K562 (cell line): ENCODE measurements at regions of chr4 and their contacts with region 1.

Region 1: GRCh38 chr4:2418650-2419571 is at the start of gene CFAP99:
- DNase-seq: peak; percentile 95 to 98 (median 96)
- ATAC-seq: peak; percentile 84
- H3K4me3 ChIP-seq: peak within 1 kb of the TSS; percentile 58
- H3K27ac ChIP-seq: peak within 1 kb of the TSS; percentile 45; the same call in 2 of the 3 replicates
- H3K4me1 ChIP-seq: peaks cover 32 to 57% of the 10 kb centered on the region in 2 experiments
- H3K27me3 ChIP-seq: no peaks in the 10 kb centered on the region; a peak in 1 of 5 replicates
- CTCF ChIP-seq: peak; percentile 19 to 37 (median 23); a peak in 4 of 6 replicates
- EP300 ChIP-seq: no peak
- POLR2A ChIP-seq: no peak
- RAD21 ChIP-seq: 0 out of 4 replicates have a peak, but pooled peaks of 1 of the 2 experiments have one; percentile 20
- polyA plus RNA-seq, gene CFAP99: not detected

Region 2: GRCh38 chr4:1870578-1871443 is 548.1 kb before region 1 on chr4 and contains the start of gene NSD2:
- CTCF ChIA-PET with region 1: no interaction called
- POLR2A ChIA-PET with region 1: no interaction called
- in situ Hi-C with region 1: no loop called
- intact Hi-C with region 1: loop called (anchors 5 kb)
- DNase-seq: peak; percentile 93 to 98 (median 94)
- ATAC-seq: peak; percentile 62
- H3K4me3 ChIP-seq: peak within 1 kb of the TSS; percentile 95
- H3K27ac ChIP-seq: peak within 1 kb of the TSS; percentile 99
- H3K4me1 ChIP-seq: peaks cover 24 to 32% of the 10 kb centered on the region in 2 experiments
- H3K27me3 ChIP-seq: no peaks in the 10 kb centered on the region
- CTCF ChIP-seq: no peak
- EP300 ChIP-seq: no peak
- POLR2A ChIP-seq: peak; percentile 85
- RAD21 ChIP-seq: no peak
- polyA plus RNA-seq, gene NSD2: 6.4 to 9.7 TPM

Region 3: DNA sequence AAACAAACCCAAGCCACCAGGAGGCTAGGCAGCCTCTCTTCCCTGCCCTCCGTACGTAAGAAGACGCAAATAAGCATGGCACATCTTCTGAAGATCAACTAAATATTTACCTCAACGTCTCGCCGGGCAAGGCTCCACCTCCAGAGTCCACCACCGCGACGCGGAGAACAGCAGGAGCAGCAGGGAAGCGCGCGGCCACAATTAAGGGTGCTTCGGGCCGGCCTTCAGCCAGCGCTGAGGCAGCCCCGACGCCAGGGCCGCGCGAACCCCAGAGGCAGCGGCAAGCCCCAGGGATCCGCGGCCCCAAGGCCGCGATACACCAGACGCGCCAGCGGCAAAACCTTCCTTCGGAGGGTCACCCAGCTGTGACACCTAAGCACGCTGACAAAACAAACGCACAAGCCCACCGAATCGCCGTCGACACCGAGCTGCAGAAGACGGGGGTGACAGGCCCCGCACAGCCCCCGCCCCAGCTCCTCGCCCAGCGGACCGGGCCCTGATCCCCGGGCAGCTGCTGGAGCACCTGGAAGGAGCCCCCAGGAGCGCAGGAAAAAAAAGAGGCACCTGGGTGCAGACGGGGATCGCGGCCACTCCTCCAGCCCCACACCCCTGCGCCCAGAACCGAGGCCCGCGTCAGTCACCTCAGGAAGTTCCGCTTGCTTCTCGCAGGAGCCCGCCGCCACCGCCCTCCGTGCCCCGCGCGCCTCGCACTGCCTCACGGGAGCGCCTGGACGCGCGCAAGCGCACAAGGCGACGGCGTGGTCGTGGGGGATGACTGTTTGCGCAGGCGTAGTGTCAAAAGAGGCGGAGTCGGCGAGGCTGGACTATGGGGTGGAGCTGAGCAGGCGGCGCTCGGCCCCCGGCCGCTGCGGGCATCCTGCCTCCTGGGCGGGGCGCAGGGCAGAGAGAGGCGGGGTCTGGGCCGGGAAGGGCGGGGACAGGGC is 177.2 kb before region 1 on chr4 and contains the starts of genes HAUS3 and POLN:
- CTCF ChIA-PET with region 1: no interaction called
- POLR2A ChIA-PET with region 1: interaction called, 3 read pairs
- in situ Hi-C with region 1: no loop called
- intact Hi-C with region 1: loop called (anchors 10 kb)
- DNase-seq: peak; percentile 98 to 99 (median 99)
- ATAC-seq: peak; percentile 94
- H3K4me3 ChIP-seq: peak within 1 kb of the TSS; percentile 79
- H3K27ac ChIP-seq: peak within 1 kb of the TSS; percentile 70
- H3K4me1 ChIP-seq: peaks cover 18 to 36% of the 10 kb centered on the region in 2 experiments
- H3K27me3 ChIP-seq: no peaks in the 10 kb centered on the region
- CTCF ChIP-seq: no peak
- EP300 ChIP-seq: no peak
- POLR2A ChIP-seq: peak; percentile 80
- RAD21 ChIP-seq: no peak
- polyA plus RNA-seq, gene HAUS3: 8.9 to 9.6 TPM
- polyA plus RNA-seq, gene POLN: 0.08 to 0.25 TPM

Region 4: DNA sequence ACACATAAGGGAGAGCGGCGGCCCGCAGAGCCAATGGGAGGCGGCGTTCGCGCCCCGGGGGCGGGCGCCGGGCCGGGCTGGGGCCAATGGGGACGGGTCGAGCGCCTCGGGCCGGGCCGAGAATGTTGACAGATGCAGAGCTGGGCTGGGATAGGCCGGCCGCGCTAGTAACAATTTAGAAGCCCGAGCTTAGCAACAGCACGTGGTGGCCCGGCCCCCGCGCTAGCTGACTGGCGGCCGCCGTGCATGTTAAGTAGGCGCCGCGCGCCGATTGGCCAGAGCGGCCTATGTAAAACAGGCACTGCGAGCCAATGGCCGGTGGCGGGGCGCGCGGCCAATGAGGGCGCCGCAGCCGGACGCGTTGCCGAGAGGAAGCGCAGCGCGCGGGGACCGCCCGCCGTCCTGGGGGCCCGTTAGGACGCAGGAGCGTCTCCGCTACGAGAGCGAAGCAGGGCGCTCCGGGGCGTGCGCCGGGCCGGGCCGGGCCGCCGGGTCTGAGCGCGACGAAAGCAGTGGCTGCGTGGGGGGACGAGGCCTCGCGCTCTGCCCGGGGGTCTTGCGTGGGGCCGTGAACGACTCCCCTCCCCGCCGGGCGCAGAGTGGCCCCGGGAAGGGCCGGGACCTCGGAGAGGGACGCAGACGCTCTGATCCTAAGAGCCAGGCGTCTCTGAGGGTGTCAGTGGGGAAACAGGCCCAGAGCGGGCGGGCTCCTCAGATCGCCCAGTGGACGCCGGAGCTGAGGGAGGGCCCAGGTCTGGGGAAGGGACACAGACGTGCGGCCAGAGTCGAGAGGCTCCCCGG is 156.6 kb before region 1 on chr4:
- CTCF ChIA-PET with region 1: no interaction called
- POLR2A ChIA-PET with region 1: no interaction called
- in situ Hi-C with region 1: no loop called
- intact Hi-C with region 1: loop called (anchors 5 kb)
- DNase-seq: peak; percentile 95 to 99 (median 98)
- ATAC-seq: peak; percentile 95
- H3K4me3 ChIP-seq: peak overlapping the region; percentile 71
- H3K27ac ChIP-seq: peak overlapping the region; percentile 87
- H3K4me1 ChIP-seq: peaks cover 16 to 78% of the 10 kb centered on the region in 2 experiments
- H3K27me3 ChIP-seq: no peaks in the 10 kb centered on the region
- CTCF ChIP-seq: no peak
- EP300 ChIP-seq: no peak
- POLR2A ChIP-seq: peak; percentile 87
- RAD21 ChIP-seq: no peak

Region 5: GRCh38 chr4:2364654-2365053 is 54.3 kb before region 1 on chr4:
- CTCF ChIA-PET with region 1: no interaction called
- POLR2A ChIA-PET with region 1: no interaction called
- in situ Hi-C with region 1: no loop called
- intact Hi-C with region 1: loop called (anchors 2 kb)
- DNase-seq: peak; percentile 78 to 95 (median 88)
- ATAC-seq: peak; percentile 89
- H3K4me3 ChIP-seq: peak overlapping the region; percentile 34
- H3K27ac ChIP-seq: peak overlapping the region; percentile 27
- H3K4me1 ChIP-seq: peaks cover 18 to 52% of the 10 kb centered on the region in 2 experiments; a peak in 4 of 5 replicates
- H3K27me3 ChIP-seq: no peaks in the 10 kb centered on the region
- CTCF ChIP-seq: no peak
- EP300 ChIP-seq: no peak
- POLR2A ChIP-seq: peak; percentile 65
- RAD21 ChIP-seq: no peak

Region 6: DNA sequence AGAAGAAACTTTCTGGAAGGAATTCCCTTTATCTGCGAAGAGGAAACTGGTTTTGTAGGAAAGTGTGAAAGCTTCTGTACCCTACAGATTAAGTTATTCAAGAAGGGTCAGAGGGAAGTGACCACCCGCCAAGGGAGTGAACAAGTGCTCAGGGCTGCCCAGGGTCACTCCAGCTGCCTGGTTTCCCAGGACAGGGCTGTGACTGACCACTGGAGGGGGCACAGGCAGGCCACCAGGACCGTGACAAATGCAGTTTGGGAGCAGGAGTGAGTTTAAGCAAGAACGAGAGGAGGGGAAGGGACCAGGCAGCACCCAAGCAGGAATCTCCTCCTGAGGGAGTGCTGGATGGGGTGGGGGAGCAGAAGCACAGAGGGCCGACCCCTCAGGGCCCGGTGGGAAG is 34.7 kb before region 1 on chr4:
- CTCF ChIA-PET with region 1: no interaction called
- POLR2A ChIA-PET with region 1: no interaction called
- in situ Hi-C with region 1: no loop called
- intact Hi-C with region 1: loop called (anchors 5 kb)
- DNase-seq: no peak
- ATAC-seq: peak; percentile 13; the same call in 1 of the 3 replicates
- H3K4me3 ChIP-seq: no peak overlapping the region
- H3K27ac ChIP-seq: no peak overlapping the region
- H3K4me1 ChIP-seq: peaks cover 41 to 56% of the 10 kb centered on the region in 2 experiments
- H3K27me3 ChIP-seq: no peaks in the 10 kb centered on the region
- CTCF ChIP-seq: peak in 1 of 3 experiments; percentile 15; a peak in 1 of 6 replicates
- EP300 ChIP-seq: no peak
- POLR2A ChIP-seq: no peak
- RAD21 ChIP-seq: peak in 1 of 2 experiments; percentile 15; a peak in 1 of 4 replicates

Region 7: GRCh38 chr4:2402029-2402428 is 16.9 kb before region 1 on chr4:
- CTCF ChIA-PET with region 1: no interaction called
- POLR2A ChIA-PET with region 1: interaction called, 7 read pairs
- in situ Hi-C with region 1: no loop called
- intact Hi-C with region 1: loop called (anchors 2 kb)
- DNase-seq: peak; percentile 89 to 93 (median 90)
- ATAC-seq: peak; percentile 96
- H3K4me3 ChIP-seq: no peak overlapping the region
- H3K27ac ChIP-seq: no peak overlapping the region
- H3K4me1 ChIP-seq: peaks cover 30 to 74% of the 10 kb centered on the region in 2 experiments
- H3K27me3 ChIP-seq: no peaks in the 10 kb centered on the region
- CTCF ChIP-seq: no peak
- EP300 ChIP-seq: 0 out of 2 replicates have a peak, but pooled peaks have one; percentile 3
- POLR2A ChIP-seq: no peak
- RAD21 ChIP-seq: no peak

Region 8: GRCh38 chr4:2574863-2575262 is 156.0 kb after region 1 on chr4:
- CTCF ChIA-PET with region 1: no interaction called
- POLR2A ChIA-PET with region 1: no interaction called
- in situ Hi-C with region 1: no loop called
- intact Hi-C with region 1: no loop called
- DNase-seq: no peak
- ATAC-seq: no peak
- H3K4me3 ChIP-seq: no peak overlapping the region
- H3K27ac ChIP-seq: no peak overlapping the region
- H3K4me1 ChIP-seq: peaks cover 8 to 9% of the 10 kb centered on the region in 2 experiments; a peak in 4 of 5 replicates
- H3K27me3 ChIP-seq: no peaks in the 10 kb centered on the region
- CTCF ChIP-seq: no peak
- EP300 ChIP-seq: no peak
- POLR2A ChIP-seq: no peak
- RAD21 ChIP-seq: no peak